Heart left ventricle (tissue), 16 donors: ENCODE measurements at regions of chr11 and their contacts with region 1.

Region 1: DNA sequence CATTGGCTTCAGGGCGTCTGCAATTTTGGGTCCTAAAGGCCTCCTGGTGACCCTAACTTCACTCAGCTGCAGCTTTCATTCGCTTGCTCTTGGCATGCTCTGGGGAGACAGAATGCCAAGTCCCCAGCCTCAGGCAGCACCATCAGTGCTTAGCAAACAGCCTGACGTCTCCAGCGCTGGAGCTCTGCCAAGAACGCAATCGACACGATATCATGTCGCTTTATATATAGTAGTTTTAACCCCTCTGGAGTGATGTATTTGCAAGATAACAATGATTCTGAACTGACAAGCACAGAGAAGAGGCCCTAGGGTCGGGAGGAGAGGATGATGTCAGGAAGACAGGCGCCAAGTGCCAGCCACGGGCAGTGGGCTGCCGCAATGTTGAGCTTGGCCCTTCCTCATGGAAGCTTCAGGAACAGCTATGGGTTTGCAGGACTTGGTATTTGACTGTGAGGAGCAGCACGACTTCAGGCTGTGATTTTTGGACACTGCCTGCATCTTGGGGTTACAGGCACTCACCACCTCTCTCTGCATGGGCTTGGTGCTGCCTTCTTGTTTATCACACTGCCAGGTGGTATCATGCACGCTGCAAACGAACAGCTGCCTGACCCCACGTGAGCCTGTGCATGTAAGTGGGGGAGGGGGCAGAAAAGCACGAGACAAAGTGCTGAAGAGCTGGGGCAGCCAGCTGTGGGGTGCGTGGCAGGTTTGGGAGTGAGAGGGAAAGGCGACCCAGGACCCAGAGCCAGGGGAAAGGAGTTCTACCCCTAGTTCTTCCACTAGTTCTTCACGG is 26.1 kb downstream of the B3GAT1 start:
- DNase-seq: no peak
- ATAC-seq: no peak
- H3K4me3 ChIP-seq: no peak overlapping the region
- H3K27ac ChIP-seq: no peak overlapping the region
- H3K4me1 ChIP-seq: no peaks in the 10 kb centered on the region
- H3K27me3 ChIP-seq: peaks cover 0 to 22% (median 4%) of the 10 kb centered on the region in 9 donors
- CTCF ChIP-seq: no peak
- POLR2A ChIP-seq: no peak

Region 2: DNA sequence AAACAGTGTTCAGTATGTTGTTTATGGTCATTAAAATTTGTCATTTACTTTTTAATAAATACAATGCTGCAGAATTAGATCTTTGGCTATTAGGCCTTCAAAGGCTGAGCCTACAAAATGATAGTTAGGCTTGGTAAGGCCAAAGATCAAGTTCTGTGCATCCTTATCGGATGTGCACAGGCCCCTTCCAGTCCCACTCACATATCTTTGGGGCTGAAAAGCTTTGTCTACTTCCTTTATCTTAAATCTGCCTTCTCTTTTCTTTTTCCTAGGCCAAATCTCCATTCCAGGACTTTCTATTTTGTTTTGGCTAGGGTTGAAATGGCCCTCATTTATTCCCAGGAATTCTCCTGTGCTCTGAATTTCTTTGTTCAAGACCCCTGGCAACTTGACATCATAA is 57.5 kb before region 1 on chr11:
- intact Hi-C with region 1: loop called in 1 of 10 experiments (anchors 10 kb)
- DNase-seq: no peak
- ATAC-seq: no peak
- H3K4me3 ChIP-seq: no peak overlapping the region
- H3K27ac ChIP-seq: no peak overlapping the region
- H3K4me1 ChIP-seq: peaks cover 0 to 21% (median 12%) of the 10 kb centered on the region in 12 donors
- H3K27me3 ChIP-seq: peaks cover 0 to 29% (median 10%) of the 10 kb centered on the region in 9 donors
- CTCF ChIP-seq: no peak
- POLR2A ChIP-seq: no peak